ENCODE measurements at regions of chr14 and their contacts with region 1.

Region 1: GRCh38 chr14:71753126-71753830 is 179.0 kb upstream of the RGS6 start:
- DNase-seq: peak; percentile 79

Region 2: DNA sequence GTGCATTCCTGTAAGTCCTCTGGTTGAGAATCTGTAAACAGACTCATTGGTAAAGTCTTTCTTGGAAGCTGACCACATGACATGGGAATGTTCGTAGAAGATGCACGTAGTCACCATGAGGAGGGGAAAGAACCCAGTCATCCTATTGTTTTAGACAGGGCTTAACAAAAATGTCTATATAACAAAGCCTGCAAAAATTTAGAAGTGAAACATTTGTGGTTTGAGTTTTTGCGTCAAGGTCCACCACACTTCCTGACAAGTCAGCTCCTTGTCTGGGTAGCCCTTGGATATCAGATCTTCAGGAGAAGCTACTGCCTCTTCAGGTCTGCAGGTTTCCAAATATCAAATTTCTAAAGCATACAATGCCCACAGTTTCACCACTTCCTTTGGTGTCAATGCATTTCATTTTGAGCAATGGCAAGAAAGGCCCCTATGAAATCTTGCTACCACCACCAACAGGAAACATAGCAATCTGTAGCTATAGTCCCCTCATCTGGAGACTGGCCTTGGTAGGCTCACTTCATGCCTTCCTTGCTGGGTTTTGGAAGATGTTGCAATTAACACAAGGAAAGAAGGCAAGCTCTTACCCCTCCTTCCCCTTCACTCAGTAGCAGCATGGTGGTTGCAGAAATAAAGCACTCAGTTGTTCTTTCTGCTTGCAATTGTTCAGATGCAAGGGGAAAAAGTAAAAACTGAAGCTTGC is 610.8 kb before region 1 on chr14:
- in situ Hi-C with region 1: loop called (anchors 10 kb)
- DNase-seq: peak; percentile 38

Region 3: DNA sequence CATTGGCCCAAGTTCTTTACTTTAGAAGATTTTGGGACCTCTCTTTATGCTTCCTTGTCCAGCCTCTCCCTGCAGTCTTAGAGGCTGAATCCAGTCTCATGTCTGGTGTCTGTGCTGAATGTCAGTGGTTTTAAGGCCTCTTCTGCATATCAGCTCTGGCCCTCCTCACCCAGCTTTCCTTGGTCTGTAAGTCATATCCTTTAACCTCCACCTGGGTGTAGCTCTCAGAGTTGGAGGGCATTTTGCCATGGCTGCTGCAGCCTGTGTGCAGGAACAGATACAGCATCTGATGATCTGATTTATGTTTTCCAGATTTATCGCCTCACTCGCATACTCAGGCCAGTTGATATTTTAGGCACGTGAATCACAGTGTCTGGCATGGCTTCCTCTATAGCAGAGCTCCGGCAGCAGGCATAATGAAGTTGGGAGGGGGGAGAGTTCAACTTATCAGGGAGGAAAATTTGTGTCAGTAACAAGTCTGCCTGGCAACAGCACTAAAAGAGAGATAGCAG is 511.0 kb before region 1 on chr14:
- in situ Hi-C with region 1: no loop called
- DNase-seq: no peak

Region 4: GRCh38 chr14:71918952-71919351 is 165.7 kb after region 1 on chr14:
- in situ Hi-C with region 1: no loop called
- DNase-seq: no peak